AG04449 (cell line): ENCODE measurements at regions of chr2 and their contacts with region 1.

Region 1: GRCh38 chr2:165015052-165015642 is 59.8 kb upstream of the SLC38A11 start:
- DNase-seq: no peak
- H3K4me3 ChIP-seq: no peak overlapping the region
- CTCF ChIP-seq: peak; percentile 84

Region 2: GRCh38 chr2:164992818-164993217 is 22.3 kb before region 1 on chr2:
- CTCF ChIA-PET with region 1: interaction called, 17 read pairs
- POLR2A ChIA-PET with region 1: no interaction called
- DNase-seq: peak; percentile 75
- H3K4me3 ChIP-seq: no peak overlapping the region
- CTCF ChIP-seq: peak; percentile 19

Region 3: GRCh38 chr2:165003433-165004130 is 11.6 kb before region 1 on chr2:
- CTCF ChIA-PET with region 1: interaction called, 13 read pairs
- POLR2A ChIA-PET with region 1: no interaction called
- DNase-seq: no peak
- H3K4me3 ChIP-seq: no peak overlapping the region
- CTCF ChIP-seq: no peak